WTC11 (cell line): ENCODE measurements at regions of chr14 and their contacts with region 1.

Region 1: DNA sequence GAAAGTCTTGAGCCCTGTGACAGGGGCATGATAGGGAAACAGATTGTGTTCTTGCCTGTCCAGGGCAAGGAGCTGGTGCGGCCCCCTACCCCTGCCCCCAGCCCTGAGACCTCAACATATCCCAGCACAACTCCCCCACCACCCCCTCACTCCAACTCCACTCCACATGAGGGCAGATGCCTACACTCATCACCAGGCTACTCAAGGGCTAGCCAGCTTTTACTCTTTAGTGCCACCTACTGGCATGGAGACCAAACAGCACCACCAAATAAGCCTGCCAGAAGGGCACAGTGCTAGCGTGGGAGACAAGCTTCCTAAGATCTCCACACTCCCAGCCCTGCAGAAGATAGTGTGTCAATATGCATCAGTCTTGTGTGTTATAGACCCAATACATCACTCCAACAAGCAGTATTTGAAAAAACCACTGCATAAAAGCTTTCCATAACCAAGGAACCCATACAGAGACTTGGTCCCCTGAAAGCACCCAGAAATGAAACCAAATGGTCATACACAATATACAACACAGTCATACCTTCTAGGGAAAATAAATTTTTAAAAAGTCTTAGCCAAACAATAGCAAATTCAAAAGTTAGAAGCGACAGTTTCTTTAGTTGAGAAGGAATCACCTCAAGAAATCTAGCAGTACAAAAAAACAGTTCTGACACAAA is 154.4 kb downstream of the KCNK10 start:
- DNase-seq: peak; percentile 58
- ATAC-seq: peak; percentile 99
- H3K4me3 Mint-ChIP-seq: no peak overlapping the region
- H3K27ac Mint-ChIP-seq: no peak overlapping the region
- H3K4me1 Mint-ChIP-seq: peaks cover 10% of the 10 kb centered on the region
- H3K27me3 Mint-ChIP-seq: no peaks in the 10 kb centered on the region; the same call in 1 of the 2 replicates
- CTCF ChIP-seq: peak; percentile 75

Region 2: DNA sequence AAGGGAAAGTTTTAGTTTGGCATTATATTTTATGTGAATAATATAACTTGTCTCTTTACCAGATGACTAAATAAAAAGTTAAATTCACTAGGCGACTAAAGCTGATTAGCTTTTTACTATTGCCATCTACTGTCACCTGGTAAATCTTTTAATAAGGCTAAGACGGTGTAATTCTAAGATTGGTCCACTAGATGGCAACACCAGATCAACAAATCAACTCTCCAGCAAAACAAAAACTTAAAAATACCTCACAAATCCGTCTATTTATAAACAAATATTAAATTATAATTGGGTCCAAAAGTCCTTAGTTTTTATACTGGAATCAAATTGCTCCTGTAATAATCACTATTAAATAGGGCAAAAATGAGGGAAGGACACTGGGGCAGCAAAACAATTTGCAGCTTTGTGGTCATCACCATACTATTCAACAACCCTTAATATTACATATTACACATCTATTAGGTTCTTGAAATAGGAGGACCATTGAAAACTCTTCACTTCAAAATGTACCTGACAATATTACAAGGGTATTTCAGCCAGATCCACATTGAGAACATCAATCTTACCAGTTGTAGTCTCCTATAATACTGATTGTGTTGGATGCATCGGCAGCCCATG is 223.5 kb before region 1 on chr14:
- CTCF ChIA-PET with region 1: interaction called, 22 read pairs
- POLR2A ChIA-PET with region 1: no interaction called
- DNase-seq: no peak
- ATAC-seq: peak; percentile 30; the same call in 1 of the 2 replicates
- H3K4me3 Mint-ChIP-seq: no peak overlapping the region
- H3K27ac Mint-ChIP-seq: no peak overlapping the region
- H3K4me1 Mint-ChIP-seq: peaks cover 3% of the 10 kb centered on the region
- H3K27me3 Mint-ChIP-seq: no peaks in the 10 kb centered on the region
- CTCF ChIP-seq: peak; percentile 53

Region 3: DNA sequence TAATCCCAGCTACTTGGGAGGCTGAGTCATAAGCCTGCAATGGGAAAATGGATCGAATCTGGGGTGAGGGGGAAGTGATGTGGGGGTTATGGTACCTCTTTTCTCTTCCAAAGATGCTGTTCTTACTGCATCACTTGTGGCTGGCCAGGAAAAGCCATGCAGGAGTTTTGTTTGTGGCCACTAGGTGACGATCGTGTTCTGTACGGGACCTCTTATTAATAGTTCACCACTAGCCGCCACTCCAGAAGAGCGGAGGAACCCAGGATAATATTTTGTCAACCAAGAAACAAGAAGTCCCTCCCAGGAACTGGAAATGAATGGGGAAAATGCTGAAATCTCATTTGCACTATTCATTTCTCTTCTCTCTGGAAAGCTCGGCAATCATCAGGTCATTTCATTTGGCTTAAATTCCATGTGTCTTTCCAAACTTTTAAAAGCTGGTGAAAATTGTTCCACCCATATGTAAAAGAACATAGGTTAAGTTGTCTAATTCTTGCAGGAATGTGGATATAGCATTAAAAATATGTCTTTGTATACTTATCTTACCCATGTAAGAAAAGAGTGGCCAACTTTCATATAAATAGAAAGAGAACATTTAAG is 154.8 kb before region 1 on chr14:
- CTCF ChIA-PET with region 1: interaction called, 33 read pairs
- POLR2A ChIA-PET with region 1: interaction called, 3 read pairs
- DNase-seq: peak; percentile 67
- ATAC-seq: peak; percentile 97
- H3K4me3 Mint-ChIP-seq: no peak overlapping the region
- H3K27ac Mint-ChIP-seq: no peak overlapping the region
- H3K4me1 Mint-ChIP-seq: peaks cover 10% of the 10 kb centered on the region
- H3K27me3 Mint-ChIP-seq: no peaks in the 10 kb centered on the region
- CTCF ChIP-seq: peak; percentile 77

Region 4: DNA sequence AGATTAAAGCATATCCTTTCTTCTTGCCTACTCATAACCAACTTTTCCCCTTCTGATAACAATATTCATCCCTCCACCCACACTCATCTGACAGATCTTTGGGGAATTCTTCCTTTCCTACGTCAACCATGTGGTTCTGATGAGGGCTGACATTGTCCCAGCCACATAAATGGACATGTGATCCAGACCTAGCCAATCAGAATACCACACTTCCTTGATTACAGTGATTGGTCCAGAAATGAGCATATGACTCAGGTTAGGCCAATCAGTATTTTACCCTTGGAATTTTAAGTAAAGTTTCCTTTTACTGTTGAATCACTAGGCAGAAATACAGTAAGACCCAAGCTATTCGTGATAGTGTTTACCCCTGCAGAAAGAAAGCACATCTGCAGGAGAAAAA is 104.8 kb before region 1 on chr14:
- CTCF ChIA-PET with region 1: no interaction called
- POLR2A ChIA-PET with region 1: no interaction called
- DNase-seq: no peak
- ATAC-seq: no peak
- H3K4me3 Mint-ChIP-seq: no peak overlapping the region
- H3K27ac Mint-ChIP-seq: no peak overlapping the region
- H3K4me1 Mint-ChIP-seq: no peaks in the 10 kb centered on the region
- H3K27me3 Mint-ChIP-seq: no peaks in the 10 kb centered on the region
- CTCF ChIP-seq: no peak

Region 5: GRCh38 chr14:88181072-88181471 is 12.4 kb after region 1 on chr14:
- CTCF ChIA-PET with region 1: interaction called, 10 read pairs
- POLR2A ChIA-PET with region 1: no interaction called
- DNase-seq: no peak
- ATAC-seq: no peak
- H3K4me3 Mint-ChIP-seq: no peak overlapping the region
- H3K27ac Mint-ChIP-seq: no peak overlapping the region
- H3K4me1 Mint-ChIP-seq: peaks cover 6% of the 10 kb centered on the region
- H3K27me3 Mint-ChIP-seq: no peaks in the 10 kb centered on the region
- CTCF ChIP-seq: no peak

Region 6: GRCh38 chr14:88264116-88264515 is 95.5 kb after region 1 on chr14:
- CTCF ChIA-PET with region 1: no interaction called
- POLR2A ChIA-PET with region 1: no interaction called
- DNase-seq: no peak
- ATAC-seq: no peak
- H3K4me3 Mint-ChIP-seq: no peak overlapping the region
- H3K27ac Mint-ChIP-seq: no peak overlapping the region
- H3K4me1 Mint-ChIP-seq: no peaks in the 10 kb centered on the region
- H3K27me3 Mint-ChIP-seq: no peaks in the 10 kb centered on the region; the same call in none of the 2 replicates
- CTCF ChIP-seq: no peak

Region 7: DNA sequence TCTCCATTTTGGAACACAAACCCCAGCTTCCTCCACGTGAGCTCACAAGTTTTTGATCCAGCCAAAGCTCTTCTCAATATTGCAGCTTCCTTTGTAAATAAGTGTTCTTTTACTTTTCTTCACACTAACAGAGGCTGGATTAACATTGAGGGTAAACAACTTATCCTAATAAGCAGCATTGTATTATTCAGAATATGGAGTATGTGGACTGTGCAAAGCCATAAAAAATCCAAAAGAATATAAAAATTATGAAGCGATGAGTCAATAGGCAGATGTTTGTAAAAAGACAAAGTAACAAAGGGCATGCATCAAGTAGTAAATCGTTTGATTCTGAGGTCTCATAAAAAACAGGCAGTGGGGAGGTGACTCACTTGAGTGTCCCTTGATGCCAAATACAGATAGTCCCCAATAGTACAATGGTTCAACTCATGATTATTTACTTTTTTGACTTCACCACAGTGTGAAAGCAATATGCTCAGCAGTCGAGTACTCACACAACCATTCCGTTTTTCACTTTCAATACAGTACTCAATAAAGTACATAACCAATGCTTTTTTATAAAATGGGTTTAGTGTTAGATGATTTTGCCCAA is 177.5 kb after region 1 on chr14:
- CTCF ChIA-PET with region 1: no interaction called
- POLR2A ChIA-PET with region 1: no interaction called
- DNase-seq: no peak
- ATAC-seq: no peak
- H3K4me3 Mint-ChIP-seq: no peak overlapping the region
- H3K27ac Mint-ChIP-seq: no peak overlapping the region
- H3K4me1 Mint-ChIP-seq: peaks cover 10% of the 10 kb centered on the region
- H3K27me3 Mint-ChIP-seq: no peaks in the 10 kb centered on the region
- CTCF ChIP-seq: no peak